ENCODE measurements at regions of chr2 and their contacts with region 1.

Region 1: DNA sequence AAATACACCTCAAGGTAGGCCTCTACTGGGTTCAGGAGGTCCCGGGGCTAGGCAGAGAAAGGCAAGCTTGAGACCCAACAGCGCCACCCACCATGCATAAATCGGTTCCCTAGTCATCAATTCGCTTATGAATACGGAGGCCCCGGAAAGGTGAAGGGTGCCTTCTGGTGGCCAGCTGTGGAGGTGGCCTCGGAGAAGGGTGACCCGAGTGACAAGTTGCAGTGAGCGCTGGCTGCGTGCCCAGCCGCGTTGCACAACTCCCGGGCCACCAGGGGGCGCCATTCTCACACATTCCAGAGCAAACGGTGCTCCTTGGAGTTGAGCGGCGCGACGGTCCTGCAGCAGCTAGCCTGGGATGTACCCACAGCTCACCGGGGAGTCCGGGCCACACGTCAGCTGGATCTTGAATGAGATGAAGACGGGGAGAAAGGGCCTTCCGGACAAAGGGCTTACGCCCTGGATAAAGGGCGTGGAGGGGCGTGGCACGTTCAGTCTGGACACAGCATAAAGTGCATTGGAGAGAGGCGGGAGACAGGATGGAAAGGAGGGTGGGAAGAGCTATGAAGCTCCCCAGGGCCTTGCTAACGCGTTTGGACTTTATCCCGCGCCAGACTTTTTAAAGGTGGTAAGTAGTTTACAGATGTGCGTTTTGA is 20.4 kb downstream of the TMSB10 start:
- DNase-seq: peak; percentile 100
- ATAC-seq: peak; percentile 81
- H3K4me3 Mint-ChIP-seq: peak overlapping the region; percentile 91
- H3K27ac Mint-ChIP-seq: peak overlapping the region; percentile 84
- H3K4me1 Mint-ChIP-seq: peaks cover 37% of the 10 kb centered on the region
- H3K27me3 Mint-ChIP-seq: no peaks in the 10 kb centered on the region
- CTCF ChIP-seq: peak; percentile 99

Region 2: DNA sequence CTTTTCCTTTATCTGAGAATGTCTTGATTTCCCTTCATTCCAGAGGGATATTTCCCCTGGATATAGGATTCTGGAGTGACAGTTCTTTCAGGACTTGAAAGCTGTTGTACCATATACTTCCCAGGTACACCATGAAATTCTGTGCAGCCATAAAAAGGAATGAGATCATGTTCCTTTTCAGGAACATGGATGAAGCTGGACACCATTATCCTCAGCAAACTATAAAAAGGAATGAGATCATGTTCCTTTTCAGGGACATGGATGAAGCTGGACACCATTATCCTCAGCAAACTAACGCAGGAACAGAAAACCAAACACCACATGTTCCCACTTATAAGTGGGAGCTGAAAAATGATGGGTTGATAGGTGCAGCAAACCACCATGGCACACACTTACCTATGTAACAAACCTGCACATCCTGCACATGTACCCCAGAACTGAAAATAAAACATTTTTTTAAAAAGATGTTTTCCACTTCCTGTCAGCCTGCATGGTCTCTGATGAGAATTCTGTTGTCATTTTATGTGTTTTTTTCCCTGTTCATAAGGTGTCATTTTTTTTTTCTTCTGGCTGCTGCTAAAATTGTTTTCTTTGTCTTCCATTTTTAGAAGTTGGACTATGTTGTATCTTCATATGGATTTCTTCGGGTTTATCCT is 276.2 kb before region 1 on chr2:
- CTCF ChIA-PET with region 1: interaction called, 10 read pairs
- POLR2A ChIA-PET with region 1: interaction called, 3 read pairs
- intact Hi-C with region 1: no loop called
- DNase-seq: no peak
- ATAC-seq: peak; percentile 43
- H3K4me3 Mint-ChIP-seq: peak overlapping the region; percentile 3
- H3K27ac Mint-ChIP-seq: peak overlapping the region; percentile 26
- H3K4me1 Mint-ChIP-seq: peaks cover 77% of the 10 kb centered on the region
- H3K27me3 Mint-ChIP-seq: no peaks in the 10 kb centered on the region
- CTCF ChIP-seq: no peak

Region 3: GRCh38 chr2:84856787-84857186 is 69.1 kb before region 1 on chr2:
- CTCF ChIA-PET with region 1: interaction called, 20 read pairs
- POLR2A ChIA-PET with region 1: interaction called, 5 read pairs
- intact Hi-C with region 1: no loop called
- DNase-seq: peak; percentile 76
- ATAC-seq: peak; percentile 82
- H3K4me3 Mint-ChIP-seq: peak overlapping the region; percentile 49
- H3K27ac Mint-ChIP-seq: peak overlapping the region; percentile 93
- H3K4me1 Mint-ChIP-seq: peaks cover 93% of the 10 kb centered on the region
- H3K27me3 Mint-ChIP-seq: no peaks in the 10 kb centered on the region
- CTCF ChIP-seq: no peak

Region 4: GRCh38 chr2:84888401-84889276 is 37.2 kb before region 1 on chr2:
- CTCF ChIA-PET with region 1: interaction called, 84 read pairs
- POLR2A ChIA-PET with region 1: interaction called, 18 read pairs
- intact Hi-C with region 1: loop called (anchors 2 kb)
- DNase-seq: peak; percentile 79
- ATAC-seq: peak; percentile 93
- H3K4me3 Mint-ChIP-seq: peak overlapping the region; percentile 68
- H3K27ac Mint-ChIP-seq: peak overlapping the region; percentile 92
- H3K4me1 Mint-ChIP-seq: peaks cover 60% of the 10 kb centered on the region
- H3K27me3 Mint-ChIP-seq: no peaks in the 10 kb centered on the region
- CTCF ChIP-seq: no peak

Region 5: DNA sequence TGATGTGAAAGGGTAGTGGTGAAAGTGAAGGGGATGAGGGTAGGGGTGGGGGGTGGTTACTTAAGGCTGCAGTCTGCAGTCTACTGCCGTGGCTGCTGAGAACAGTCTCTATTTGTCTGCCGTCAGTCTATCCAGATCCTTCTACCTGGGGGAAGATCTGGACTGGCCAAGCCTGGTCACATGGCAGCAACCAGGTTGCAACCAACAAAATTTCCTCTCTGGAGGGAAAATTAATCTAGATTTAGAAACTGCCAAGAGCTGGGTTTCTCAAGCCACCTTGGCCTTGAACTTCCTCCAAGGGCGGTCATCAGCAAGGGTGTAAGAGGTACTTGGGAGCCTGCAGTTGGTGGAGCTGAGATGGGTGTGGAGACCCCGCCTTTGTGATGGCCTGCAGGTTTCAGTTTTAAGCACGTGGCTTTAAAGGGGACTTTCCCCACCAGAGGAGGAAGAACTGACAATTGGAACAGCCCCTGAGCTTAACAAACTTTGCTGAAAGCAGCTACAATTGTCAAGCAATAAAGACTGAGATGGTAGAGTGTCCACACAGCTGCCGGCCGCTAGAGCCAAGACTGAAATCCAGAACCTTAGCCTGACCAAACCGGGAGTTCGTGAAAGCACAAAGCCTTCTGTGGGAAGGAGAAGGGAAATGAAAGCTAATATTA is 13.7 kb after region 1 on chr2:
- CTCF ChIA-PET with region 1: interaction called, 88 read pairs
- POLR2A ChIA-PET with region 1: interaction called, 21 read pairs
- intact Hi-C with region 1: loop called (anchors 1 kb)
- DNase-seq: peak; percentile 92
- ATAC-seq: peak; percentile 84
- H3K4me3 Mint-ChIP-seq: peak overlapping the region; percentile 63
- H3K27ac Mint-ChIP-seq: peak overlapping the region; percentile 94
- H3K4me1 Mint-ChIP-seq: peaks cover 67% of the 10 kb centered on the region
- H3K27me3 Mint-ChIP-seq: no peaks in the 10 kb centered on the region
- CTCF ChIP-seq: no peak

Region 6: DNA sequence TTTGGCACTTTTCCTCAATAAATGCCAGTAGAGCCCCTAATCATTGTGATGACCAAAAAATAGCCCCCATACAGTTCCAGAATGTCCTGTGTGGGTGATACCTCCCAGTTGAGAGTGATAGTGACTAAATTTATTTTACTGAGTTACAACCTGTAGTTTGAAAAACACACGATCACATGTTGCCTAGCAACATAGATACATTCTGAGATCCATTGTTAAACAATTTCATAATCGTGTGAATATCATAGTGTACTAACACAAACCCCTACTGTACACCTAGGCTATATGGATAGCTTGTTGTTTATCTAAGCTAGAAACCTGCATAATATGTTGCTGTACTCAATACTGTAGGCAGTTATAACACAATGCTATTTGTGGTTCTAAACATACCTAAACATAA is 75.7 kb after region 1 on chr2:
- CTCF ChIA-PET with region 1: interaction called, 19 read pairs
- POLR2A ChIA-PET with region 1: no interaction called
- intact Hi-C with region 1: no loop called
- DNase-seq: no peak
- ATAC-seq: peak; percentile 32
- H3K4me3 Mint-ChIP-seq: no peak overlapping the region
- H3K27ac Mint-ChIP-seq: peak overlapping the region; percentile 74
- H3K4me1 Mint-ChIP-seq: peaks cover 61% of the 10 kb centered on the region
- H3K27me3 Mint-ChIP-seq: no peaks in the 10 kb centered on the region
- CTCF ChIP-seq: no peak

Measured in activated CD8-positive, alpha-beta T cell treated with anti-CD3 and anti-CD28 coated beads for 36 hours (primary cell).